ENCODE measurements at regions of chrX and their contacts with region 1.

Region 1: GRCh38 chrX:54044126-54044876 is at the start of gene PHF8:
- DNase-seq: peak; percentile 78 to 97
- H3K4me3 ChIP-seq: peak within 1 kb of the TSS; percentile 64 to 73
- H3K27ac ChIP-seq: peak within 1 kb of the TSS; percentile 85 to 96
- H3K4me1 ChIP-seq: no peaks in the 10 kb centered on the region
- H3K27me3 ChIP-seq: no peaks in the 10 kb centered on the region
- CTCF ChIP-seq: no peak
- total RNA-seq, gene PHF8: 41.6 TPM

Region 2: GRCh38 chrX:53481816-53482465 is 562.4 kb before region 1 on chrX:
- intact Hi-C with region 1: no loop called
- DNase-seq: peak in 1 of 2 donors; percentile 65
- H3K4me3 ChIP-seq: no peak overlapping the region
- H3K27ac ChIP-seq: no peak overlapping the region
- H3K4me1 ChIP-seq: no peaks in the 10 kb centered on the region
- H3K27me3 ChIP-seq: no peaks in the 10 kb centered on the region
- CTCF ChIP-seq: peak; percentile 21 to 54 (median 33)

Region 3: GRCh38 chrX:54076903-54077302 is 32.6 kb after region 1 on chrX:
- intact Hi-C with region 1: no loop called
- DNase-seq: no peak
- H3K4me3 ChIP-seq: no peak overlapping the region
- H3K27ac ChIP-seq: no peak overlapping the region
- H3K4me1 ChIP-seq: no peaks in the 10 kb centered on the region
- H3K27me3 ChIP-seq: no peaks in the 10 kb centered on the region
- CTCF ChIP-seq: no peak

Region 4: GRCh38 chrX:54182864-54183608 is 138.7 kb after region 1 on chrX and contains the start of gene FAM120C:
- intact Hi-C with region 1: loop called (anchors 1 kb)
- DNase-seq: peak in 1 of 2 donors; percentile 73
- H3K4me3 ChIP-seq: peak within 1 kb of the TSS; percentile 69 to 78
- H3K27ac ChIP-seq: peak within 1 kb of the TSS; percentile 86 to 91
- H3K4me1 ChIP-seq: peaks cover 0 to 3% of the 10 kb centered on the region in 2 donors
- H3K27me3 ChIP-seq: no peaks in the 10 kb centered on the region
- CTCF ChIP-seq: no peak
- total RNA-seq, gene FAM120C: 1.6 TPM

Region 5: DNA sequence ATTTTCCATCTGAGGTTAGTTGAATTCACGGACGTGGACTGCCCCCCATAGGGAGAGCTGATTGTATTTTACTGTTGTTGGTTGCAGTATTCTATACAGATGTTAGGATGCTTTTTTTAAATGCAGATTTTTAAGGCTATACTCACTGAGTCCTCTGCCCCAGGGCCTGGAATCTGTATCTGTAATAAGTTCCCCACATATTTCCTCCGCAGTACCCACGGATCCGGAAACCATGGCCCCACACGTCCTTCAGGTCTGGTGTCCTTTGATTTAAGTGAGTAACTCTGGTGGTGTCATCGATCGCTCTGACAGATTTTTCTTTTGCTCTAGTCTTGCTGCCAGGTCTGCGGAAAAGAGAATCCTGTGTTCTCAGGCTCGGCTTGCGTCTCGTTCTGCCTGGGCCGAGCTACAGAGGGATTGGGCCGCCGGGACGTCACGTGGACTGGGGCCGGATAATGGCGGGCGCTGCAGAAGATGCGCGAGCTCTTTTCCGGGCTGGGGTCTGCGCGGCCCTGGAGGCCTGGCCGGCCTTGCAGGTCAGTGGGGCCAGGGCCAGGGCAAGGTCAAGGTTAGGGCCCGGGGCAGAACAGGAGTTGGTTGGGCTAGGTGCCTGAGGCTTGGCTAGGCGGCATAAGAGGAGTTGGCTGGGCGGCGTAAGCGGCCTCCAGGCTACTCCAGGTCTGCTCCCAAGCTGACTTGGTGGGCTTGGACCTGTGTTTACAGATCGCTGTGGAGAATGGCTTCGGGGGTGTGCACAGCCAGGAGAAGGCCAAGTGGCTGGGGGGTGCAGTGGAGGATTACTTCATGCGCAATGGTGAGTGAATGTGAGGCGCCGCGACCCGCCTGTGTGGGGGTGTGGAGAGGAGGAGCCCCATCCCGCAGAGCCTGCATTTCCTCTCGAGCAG is 395.9 kb after region 1 on chrX and contains the start of gene TSR2:
- intact Hi-C with region 1: loop called (anchors 5 kb)
- DNase-seq: peak; percentile 63 to 88
- H3K4me3 ChIP-seq: peak within 1 kb of the TSS; percentile 54 to 89
- H3K27ac ChIP-seq: peak within 1 kb of the TSS; percentile 38 to 56
- H3K4me1 ChIP-seq: peaks cover 0 to 6% of the 10 kb centered on the region in 2 donors
- H3K27me3 ChIP-seq: no peaks in the 10 kb centered on the region
- CTCF ChIP-seq: peak in 1 of 3 experiments; percentile 26
- total RNA-seq, gene TSR2: 14.0 TPM

Region 6: GRCh38 chrX:55160685-55161552 is 1116.6 kb after region 1 on chrX:
- intact Hi-C with region 1: loop called (anchors 10 kb)
- DNase-seq: peak; percentile 55 to 92
- H3K4me3 ChIP-seq: peak overlapping the region; percentile 46 to 68
- H3K27ac ChIP-seq: peak overlapping the region; percentile 87 to 89
- H3K4me1 ChIP-seq: no peaks in the 10 kb centered on the region
- H3K27me3 ChIP-seq: no peaks in the 10 kb centered on the region
- CTCF ChIP-seq: peak; percentile 24 to 51 (median 51)